ENCODE measurements at regions of chr9 and their contacts with region 1.

Region 1: DNA sequence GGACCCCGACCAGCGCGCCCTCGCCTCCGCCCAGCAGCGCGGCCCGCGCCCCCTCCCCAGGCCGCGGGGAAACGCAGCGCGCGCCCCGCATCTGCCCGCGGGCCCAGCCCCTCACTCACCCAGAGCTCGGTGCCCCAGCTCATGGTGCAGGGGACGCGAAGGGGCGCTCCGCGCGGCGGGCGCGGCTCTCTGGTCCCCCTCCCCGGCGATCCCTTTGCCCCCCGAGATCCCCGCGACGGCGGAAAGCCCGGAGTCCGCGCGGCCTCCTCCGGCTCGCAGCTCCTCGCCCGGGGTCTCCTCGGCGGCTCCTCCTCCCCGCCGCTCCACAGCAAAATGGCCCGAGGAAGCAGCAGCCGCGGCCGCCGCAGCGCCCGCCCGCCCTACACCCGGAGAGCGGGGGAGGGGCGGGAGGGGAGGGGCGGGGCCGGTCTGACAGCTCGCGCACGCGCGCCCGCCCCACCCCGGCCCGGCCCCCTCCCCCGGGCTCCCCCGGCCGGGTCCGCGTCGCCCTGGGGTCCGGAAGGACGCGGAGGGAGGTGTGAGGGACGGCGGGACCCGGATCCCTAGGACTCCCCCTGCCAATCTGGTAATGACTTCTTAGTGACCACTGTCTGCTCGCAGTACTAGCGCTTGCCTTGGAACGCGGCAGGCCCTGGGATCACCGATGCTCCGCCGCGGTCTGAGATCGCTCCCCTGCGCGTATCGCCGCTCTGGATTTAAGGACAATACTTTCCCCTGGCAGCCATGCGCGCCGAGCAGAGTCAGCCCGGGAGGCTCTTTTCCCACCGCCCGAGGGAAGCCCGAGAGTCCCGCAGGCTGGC is at the start of gene FNBP1:
- DNase-seq: peak; percentile 77
- ATAC-seq: peak; percentile 71
- H3K4me3 Mint-ChIP-seq: peak within 1 kb of the TSS; percentile 99
- H3K27ac Mint-ChIP-seq: peak within 1 kb of the TSS; percentile 99
- H3K4me1 Mint-ChIP-seq: peaks cover 54% of the 10 kb centered on the region
- H3K27me3 Mint-ChIP-seq: no peaks in the 10 kb centered on the region
- CTCF ChIP-seq: no peak
- total RNA-seq, gene FNBP1: 454 and 501 TPM in 2 replicates

Region 2: GRCh38 chr9:129962889-129963703 is 79.9 kb before region 1 on chr9:
- CTCF ChIA-PET with region 1: interaction called, 3 read pairs
- POLR2A ChIA-PET with region 1: interaction called, 24 read pairs
- intact Hi-C with region 1: loop called (anchors 2 kb)
- DNase-seq: no peak
- ATAC-seq: peak; percentile 94
- H3K4me3 Mint-ChIP-seq: peak overlapping the region; percentile 81
- H3K27ac Mint-ChIP-seq: peak overlapping the region; percentile 90
- H3K4me1 Mint-ChIP-seq: peaks cover 67% of the 10 kb centered on the region
- H3K27me3 Mint-ChIP-seq: no peaks in the 10 kb centered on the region
- CTCF ChIP-seq: no peak

Region 3: DNA sequence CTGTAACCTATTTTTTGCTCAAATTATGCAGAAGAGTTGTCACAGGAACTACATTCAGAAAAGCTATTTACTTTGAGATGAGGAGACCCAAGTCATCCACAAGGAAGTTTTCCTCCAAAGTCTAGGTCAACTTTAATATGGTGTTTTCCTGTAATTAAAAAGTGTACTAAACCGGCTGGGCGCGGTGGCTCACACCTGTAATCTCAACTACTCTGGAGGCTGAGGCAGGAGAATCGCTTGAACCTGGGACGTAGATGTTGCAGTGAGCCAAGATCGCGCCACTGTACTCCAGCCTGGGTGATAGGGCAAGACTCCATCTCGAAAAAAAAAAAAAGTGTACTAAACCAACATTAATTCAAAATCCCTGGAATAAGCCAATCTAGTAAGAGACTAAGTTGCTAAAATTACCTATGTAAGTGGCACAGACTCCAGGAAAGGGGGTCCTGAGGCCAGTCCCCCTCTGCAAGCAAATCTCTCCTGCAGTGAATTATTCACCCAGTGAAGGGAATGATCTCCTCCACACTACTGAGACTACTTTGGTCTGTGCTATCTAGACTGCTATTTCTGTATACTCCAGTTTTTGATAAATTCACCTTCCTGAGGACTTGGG is 39.0 kb before region 1 on chr9:
- CTCF ChIA-PET with region 1: no interaction called
- POLR2A ChIA-PET with region 1: interaction called, 1,209 read pairs
- intact Hi-C with region 1: loop called (anchors 2 kb)
- DNase-seq: no peak
- ATAC-seq: no peak
- H3K4me3 Mint-ChIP-seq: peak overlapping the region; percentile 4
- H3K27ac Mint-ChIP-seq: peak overlapping the region; percentile 71
- H3K4me1 Mint-ChIP-seq: peaks cover 85% of the 10 kb centered on the region
- H3K27me3 Mint-ChIP-seq: no peaks in the 10 kb centered on the region
- CTCF ChIP-seq: no peak

Region 4: DNA sequence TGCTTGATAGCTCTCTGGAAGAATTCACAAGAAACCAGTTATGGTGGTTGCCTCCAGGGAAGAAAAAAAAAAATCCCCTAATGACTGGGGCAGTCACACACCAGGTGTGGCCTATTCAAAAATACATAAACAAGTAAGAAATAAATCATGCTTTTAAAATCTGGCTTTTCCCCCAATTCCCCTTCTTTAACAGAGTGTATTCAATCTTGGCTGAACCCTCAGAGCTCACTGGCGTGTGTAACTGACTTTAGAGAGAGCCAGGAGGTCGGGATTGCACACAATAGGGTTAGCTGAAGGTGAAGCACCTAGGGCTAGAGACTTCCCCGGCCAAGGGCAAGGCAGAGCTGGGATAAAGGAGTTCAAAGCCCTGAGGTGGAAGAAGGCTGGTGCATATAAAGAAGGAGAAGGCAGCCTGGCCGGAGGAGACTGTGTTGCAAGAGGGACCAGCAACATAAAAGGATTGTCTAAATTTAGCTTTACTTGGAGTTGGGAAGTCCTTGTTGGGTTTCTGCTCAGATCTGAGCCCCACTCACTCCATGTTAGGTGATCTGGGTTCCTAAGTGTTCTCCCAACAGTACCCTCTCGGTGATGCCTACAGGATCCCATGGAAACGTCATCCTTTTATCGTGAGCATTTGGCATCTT is 19.8 kb before region 1 on chr9:
- CTCF ChIA-PET with region 1: interaction called, 4 read pairs
- POLR2A ChIA-PET with region 1: interaction called, 1,209 read pairs
- intact Hi-C with region 1: loop called (anchors 1 kb)
- DNase-seq: no peak
- ATAC-seq: peak; percentile 78
- H3K4me3 Mint-ChIP-seq: peak overlapping the region; percentile 85
- H3K27ac Mint-ChIP-seq: peak overlapping the region; percentile 98
- H3K4me1 Mint-ChIP-seq: peaks cover 98% of the 10 kb centered on the region
- H3K27me3 Mint-ChIP-seq: no peaks in the 10 kb centered on the region
- CTCF ChIP-seq: no peak

Region 5: DNA sequence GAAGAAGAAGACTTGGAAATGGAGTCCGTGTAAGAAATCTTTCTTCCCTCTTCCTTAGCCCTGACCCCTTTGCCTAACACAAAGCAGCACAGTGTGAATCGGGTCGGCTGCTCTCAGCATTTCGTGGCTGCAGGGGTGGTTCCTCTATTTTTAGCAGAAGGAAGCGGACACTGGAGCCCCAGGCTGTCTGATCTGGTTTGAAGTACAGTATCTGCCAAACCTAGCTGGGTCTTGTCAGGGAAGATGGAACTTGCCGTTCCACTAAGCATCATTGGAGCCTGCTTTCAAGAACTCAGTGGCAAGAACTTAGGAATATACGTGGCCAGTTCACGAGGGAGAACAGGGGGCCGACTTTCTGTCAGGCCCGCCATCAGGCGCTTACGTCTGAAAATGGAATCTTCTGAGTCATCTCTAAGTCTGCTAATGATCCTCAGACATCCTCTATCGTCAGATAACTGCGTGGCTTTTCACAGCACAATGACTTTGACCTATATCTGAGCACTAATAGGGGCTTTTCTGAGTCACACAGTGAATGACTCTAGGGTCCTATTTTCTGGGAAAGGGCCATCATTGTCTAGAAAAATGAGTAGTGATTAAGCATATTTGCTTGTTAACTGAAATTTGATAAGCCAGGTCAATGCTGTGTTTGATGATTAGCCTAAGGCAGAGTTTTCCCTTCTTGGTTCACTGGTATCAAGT is 85.8 kb after region 1 on chr9:
- CTCF ChIA-PET with region 1: no interaction called
- POLR2A ChIA-PET with region 1: interaction called, 9 read pairs
- intact Hi-C with region 1: loop called (anchors 1 kb)
- DNase-seq: peak; percentile 50
- ATAC-seq: peak; percentile 79
- H3K4me3 Mint-ChIP-seq: peak overlapping the region; percentile 83
- H3K27ac Mint-ChIP-seq: peak overlapping the region; percentile 99
- H3K4me1 Mint-ChIP-seq: peaks cover 39% of the 10 kb centered on the region
- H3K27me3 Mint-ChIP-seq: no peaks in the 10 kb centered on the region
- CTCF ChIP-seq: no peak

Region 6: GRCh38 chr9:130232899-130233586 is 190.0 kb after region 1 on chr9:
- CTCF ChIA-PET with region 1: no interaction called
- POLR2A ChIA-PET with region 1: no interaction called
- intact Hi-C with region 1: no loop called
- DNase-seq: no peak
- ATAC-seq: no peak
- H3K4me3 Mint-ChIP-seq: no peak overlapping the region
- H3K27ac Mint-ChIP-seq: no peak overlapping the region
- H3K4me1 Mint-ChIP-seq: peaks cover 3% of the 10 kb centered on the region
- H3K27me3 Mint-ChIP-seq: peaks cover 5% of the 10 kb centered on the region
- CTCF ChIP-seq: no peak